ENCODE measurements at regions of chr2 and their contacts with region 1.

Region 1: DNA sequence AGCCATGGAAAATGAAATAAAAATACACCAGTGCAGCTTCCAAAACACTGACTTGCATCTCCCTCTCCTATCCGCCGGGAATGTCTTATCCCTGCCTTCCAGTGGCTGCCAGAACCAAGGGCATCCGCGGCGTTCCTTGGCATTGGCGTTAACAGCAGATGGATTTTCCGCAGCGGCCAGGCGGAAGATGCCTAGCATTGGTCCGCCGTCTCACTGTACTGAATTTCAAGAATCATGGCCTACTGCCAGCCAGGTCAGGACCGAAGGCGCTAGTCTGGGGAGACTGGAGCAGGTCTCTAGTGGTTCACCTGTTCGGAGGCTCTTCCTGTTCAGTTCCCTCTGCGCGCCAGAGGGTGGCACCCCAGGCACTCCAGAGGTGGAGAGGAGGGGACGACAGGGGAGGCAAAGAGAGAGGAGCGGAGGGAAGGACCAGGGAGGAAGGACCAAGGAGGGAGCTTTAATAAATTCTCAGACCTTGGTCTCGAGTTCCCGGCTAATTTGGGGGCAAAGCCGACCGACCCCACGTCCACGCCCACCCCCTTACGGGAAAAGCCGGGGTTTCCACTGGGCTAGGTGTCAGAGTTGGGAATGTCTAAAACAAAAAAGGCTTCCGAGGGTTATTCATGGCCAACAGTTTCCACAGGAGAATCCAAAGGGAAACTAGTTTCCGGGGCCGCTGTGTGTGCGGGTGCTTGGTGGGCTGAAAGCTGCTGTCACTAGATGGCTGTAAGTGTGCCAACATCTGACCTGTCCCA is 3.7 kb upstream of the BCL2L11 start:
- DNase-seq: peak; percentile 82

Region 2: GRCh38 chr2:110812726-110813645 is 304.0 kb before region 1 on chr2:
- intact Hi-C with region 1: loop called (anchors 5 kb)
- DNase-seq: no peak

Region 3: DNA sequence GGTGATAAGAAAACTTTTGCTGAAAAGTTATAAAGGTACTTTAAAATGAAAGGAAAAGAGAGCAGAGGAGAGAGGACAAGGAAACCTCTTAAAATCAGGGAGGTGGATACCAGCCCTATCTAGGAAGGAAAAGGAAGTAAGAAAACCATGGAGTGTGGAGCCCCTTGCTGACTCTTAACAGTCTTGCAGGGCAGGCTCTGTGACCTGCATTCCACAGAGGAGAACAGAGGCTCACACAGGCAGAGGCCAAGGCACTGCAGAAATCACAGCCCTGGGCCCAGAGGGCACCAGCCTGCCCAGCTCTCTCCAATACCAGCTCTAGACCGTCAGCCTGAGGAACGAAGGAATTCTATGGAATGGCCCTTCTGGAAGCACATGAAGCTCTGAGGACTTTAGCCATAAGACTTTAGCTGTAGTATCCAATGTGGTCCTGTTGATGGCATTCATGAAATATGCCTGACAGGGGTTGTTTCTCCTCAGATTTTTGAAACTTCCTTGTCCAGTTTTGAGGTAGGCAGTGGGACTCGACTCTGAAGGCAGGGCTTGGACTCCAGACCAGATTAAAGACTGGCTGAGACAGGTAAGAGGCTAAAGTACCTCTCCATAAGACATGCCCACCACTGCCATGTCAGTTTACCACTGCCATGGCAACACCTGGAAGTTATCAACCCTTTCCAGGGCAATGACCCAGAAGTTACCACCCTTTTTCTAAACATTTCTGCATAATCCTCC is 550.7 kb after region 1 on chr2:
- intact Hi-C with region 1: loop called (anchors 2 kb)
- DNase-seq: no peak

Region 4: GRCh38 chr2:111705711-111706336 is 588.8 kb after region 1 on chr2:
- intact Hi-C with region 1: loop called (anchors 10 kb)
- DNase-seq: no peak

Measured in cardiac septum (tissue), 1 donor.